Sciatic nerve (tissue), 2 donors: ENCODE measurements at regions of chr17 and their contacts with region 1.

Region 1: DNA sequence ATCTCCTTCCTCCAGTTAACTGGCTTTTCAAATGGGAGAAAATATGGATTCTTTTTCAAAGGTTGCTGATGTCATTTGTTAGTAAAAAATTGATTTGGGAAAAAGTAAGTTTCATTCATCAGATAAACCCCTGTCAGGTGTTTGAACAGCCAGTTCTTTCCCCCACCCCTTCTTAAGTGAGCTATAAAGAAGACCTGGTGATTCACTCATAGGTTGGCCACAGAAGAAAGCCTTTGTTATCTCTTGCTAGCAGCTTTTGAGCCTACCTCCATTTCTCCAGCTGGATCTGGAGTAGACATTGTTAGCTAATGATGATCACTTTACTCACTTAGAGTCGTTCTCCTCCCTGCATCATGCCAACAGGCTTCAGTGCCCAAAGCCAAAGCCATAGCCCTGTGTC is 63.0 kb downstream of the NLK start:
- DNase-seq: no peak
- ATAC-seq: no peak

Region 2: DNA sequence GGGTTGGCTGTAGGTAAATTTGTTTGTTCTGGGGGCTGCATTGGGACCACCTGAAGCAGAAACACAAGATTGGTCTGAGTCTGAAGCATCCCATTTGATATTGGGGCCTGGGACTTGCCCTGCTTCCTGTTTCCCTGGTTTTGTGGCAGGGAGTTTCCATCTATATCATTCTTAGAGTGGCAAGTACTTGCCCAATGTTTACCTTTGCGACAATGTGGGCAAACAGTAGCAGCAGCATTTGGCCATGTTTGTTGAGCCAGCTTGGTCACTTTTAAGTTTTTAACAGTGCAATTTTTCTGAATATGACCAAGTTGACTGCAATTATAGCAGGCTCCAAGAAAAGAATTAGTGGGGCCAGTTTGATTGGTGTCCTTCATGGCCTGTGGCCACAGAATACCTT is 412.7 kb before region 1 on chr17:
- intact Hi-C with region 1: loop called (anchors 10 kb)
- DNase-seq: no peak
- ATAC-seq: no peak